ENCODE measurements at regions of chr3 and their contacts with region 1.

Region 1: GRCh38 chr3:57616233-57616632 is 19.1 kb upstream of the ARF4 start:
- DNase-seq: no peak

Region 2: DNA sequence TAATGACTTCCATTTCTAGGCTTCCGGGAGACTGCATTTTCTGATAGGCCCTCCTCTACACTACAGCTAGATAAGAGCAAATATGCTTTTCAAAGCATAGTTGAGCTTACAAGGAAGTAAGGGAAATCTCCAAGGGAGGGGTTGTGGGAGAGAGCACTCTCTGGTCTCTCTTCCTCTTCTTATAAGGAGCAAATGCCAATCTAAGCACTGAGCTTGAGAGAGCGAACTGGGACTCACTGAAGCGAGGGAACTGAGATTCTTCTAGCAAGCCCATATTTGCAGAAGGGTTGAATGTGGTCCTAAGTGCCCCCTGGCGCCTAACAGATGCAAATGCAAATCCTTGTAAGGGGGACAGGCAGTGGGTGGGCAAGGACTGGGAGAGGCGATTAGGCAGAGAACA is 1312.7 kb before region 1 on chr3:
- intact Hi-C with region 1: no loop called
- DNase-seq: no peak

Region 3: DNA sequence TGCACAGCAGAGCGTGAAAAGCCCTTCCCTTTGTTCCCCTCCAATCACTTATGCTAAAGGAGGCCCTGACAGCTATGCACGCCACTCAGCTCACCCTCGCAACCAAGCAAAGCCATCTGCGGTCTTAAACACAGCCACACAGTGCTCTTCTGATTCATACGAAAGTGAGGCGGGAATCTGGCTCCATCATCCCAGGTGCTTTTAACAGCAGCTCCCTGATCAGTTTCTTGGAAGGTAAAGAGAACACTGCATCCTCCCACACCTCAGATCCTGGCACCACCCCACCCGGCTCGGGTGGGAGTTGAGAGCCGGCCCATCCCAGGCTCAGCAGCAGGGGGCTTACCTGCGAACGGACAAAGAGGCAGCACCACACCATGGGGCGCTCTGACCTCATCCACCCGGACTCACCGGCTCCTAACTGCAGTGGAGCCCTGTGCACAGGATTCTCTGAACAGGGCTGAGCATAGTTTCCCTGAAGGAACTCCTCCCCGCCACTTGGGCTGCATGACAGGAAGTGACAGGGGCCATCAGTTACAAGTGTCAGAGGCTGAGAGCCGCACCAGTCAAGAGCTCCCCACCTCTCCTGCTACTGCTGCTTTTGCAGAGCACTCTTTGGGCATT is 700.2 kb before region 1 on chr3:
- intact Hi-C with region 1: no loop called
- DNase-seq: no peak

Region 4: GRCh38 chr3:57446318-57446841 is 169.9 kb before region 1 on chr3:
- intact Hi-C with region 1: no loop called
- DNase-seq: no peak

Region 5: DNA sequence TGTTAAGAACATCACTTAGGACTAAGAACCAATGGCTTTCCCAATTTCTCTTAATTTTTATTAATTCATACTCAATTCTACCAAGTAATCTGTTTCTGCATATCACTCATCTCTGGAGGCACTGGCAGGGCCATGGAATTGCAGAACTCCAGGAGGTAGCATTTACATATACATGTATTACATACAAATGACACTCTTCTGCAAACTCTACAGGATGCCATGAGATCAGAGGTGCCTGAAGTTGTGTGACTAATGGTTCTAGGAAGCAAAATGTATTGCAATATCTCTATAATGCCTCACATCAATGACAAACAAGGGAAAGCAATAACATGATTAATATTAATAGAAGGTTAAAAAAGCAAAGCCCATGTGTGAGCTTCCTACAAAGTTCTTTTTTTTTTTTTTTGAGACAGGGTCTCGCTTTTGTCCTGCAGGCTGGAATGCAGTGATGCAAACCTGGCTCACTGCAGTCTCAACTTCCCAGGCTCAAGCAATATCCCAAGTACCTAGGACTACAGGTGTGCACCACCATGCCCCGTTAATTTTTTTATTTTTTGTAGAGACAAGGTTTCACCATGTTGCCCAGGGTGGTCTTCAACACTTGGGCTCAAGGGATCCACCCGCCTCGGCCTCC is 43.7 kb after region 1 on chr3:
- intact Hi-C with region 1: loop called in 1 of 2 experiments (anchors 2 kb)
- DNase-seq: no peak